ENCODE measurements at regions of chr1 and their contacts with region 1.

Region 1: GRCh38 chr1:84143796-84144565 is at the start of gene PRKACB:
- DNase-seq: no peak
- H3K4me3 ChIP-seq: no peak within 1 kb of the TSS
- H3K27me3 ChIP-seq: no peaks in the 10 kb centered on the region
- CTCF ChIP-seq: no peak
- polyA plus RNA-seq, gene PRKACB: 8.4 and 23.8 TPM in 2 replicates

Region 2: GRCh38 chr1:84090447-84091245 is 53.3 kb before region 1 on chr1:
- CTCF ChIA-PET with region 1: no interaction called
- POLR2A ChIA-PET with region 1: no interaction called
- DNase-seq: no peak
- H3K4me3 ChIP-seq: no peak overlapping the region
- H3K27me3 ChIP-seq: no peaks in the 10 kb centered on the region
- CTCF ChIP-seq: no peak

Region 3: DNA sequence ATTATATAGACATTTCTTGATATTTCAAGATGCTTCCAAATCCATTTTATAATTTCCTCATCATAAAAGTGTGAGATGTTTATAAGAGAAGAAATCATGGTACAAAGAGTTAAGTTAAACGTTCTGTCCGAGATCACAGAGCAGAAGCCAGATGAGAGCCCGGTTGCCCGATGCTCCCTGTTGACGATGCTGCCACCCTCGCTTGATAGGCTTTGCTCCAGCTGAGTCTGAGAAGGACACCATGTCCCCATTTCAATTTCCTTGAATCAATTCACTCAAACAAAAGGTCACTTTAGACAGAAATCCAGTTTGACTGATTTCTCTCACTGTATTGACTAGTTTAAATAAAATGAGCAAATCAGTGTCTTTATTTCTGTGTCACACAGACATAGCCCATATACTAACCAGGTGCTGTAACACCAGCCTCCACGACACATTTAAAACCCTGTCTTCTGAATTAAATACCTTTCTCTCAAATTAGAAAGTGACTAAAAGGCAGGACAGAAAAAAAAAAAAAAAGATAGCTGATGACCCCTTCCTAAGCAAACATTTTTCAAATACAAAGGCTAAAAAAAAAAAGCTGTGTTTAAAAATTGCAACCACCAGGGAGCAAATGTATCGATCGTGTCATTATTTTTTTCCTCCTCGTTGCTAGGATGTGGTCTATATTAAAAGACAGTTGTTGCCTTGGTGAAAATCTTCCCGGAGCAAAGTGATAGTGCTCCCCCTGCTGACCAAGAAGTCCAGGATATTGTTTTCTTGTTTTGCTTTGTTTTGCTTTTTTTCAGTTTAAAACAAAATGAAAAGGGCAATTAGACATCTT is 289.5 kb after region 1 on chr1:
- CTCF ChIA-PET with region 1: interaction called, 16 read pairs
- POLR2A ChIA-PET with region 1: no interaction called
- DNase-seq: peak; percentile 14
- H3K4me3 ChIP-seq: no peak overlapping the region
- H3K27me3 ChIP-seq: no peaks in the 10 kb centered on the region
- CTCF ChIP-seq: peak; percentile 72